BJ (cell line): ENCODE measurements at regions of chr2 and their contacts with region 1.

Region 1: GRCh38 chr2:200713003-200713703 is 98.6 kb upstream of the BZW1 start:
- DNase-seq: peak; percentile 72
- H3K4me3 ChIP-seq: peak overlapping the region; percentile 38
- H3K27me3 ChIP-seq: peaks cover 1% of the 10 kb centered on the region; the same call in 1 of the 2 replicates
- CTCF ChIP-seq: peak; percentile 87

Region 2: DNA sequence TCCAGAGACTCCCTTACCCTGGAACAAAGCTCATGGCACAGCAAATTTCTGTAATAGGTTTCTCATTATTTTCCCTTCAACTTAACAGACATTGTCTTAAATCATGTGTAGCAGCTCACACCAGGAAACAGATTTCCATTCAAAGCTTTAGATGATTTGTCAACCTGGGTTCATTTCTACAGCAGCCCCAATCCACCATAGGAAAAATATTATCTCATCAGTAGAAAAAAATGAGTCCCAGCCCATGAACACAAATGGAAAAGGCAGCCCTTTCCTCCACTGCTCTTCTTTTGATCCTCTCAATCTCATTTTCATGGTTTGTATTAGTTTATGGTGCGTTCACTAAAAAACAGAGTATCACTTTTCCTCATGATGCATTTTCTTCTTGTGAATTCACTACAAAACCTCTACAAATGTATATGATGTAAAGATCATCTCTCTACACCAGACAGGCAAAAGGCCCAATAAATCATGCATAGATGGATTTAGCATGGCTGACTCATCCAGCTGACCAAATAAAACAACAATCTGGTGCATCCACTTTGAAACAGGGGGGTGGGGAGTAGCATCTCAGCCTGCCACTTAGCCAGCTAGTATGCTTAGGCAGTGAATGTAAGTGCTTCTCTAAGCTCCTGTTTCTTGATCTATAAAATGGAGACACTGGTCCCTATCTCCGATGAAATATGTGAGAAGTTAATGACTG is 1334.1 kb before region 1 on chr2:
- CTCF ChIA-PET with region 1: no interaction called
- POLR2A ChIA-PET with region 1: interaction called, 11 read pairs
- DNase-seq: no peak
- H3K4me3 ChIP-seq: no peak overlapping the region
- H3K27me3 ChIP-seq: no peaks in the 10 kb centered on the region
- CTCF ChIP-seq: no peak

Region 3: DNA sequence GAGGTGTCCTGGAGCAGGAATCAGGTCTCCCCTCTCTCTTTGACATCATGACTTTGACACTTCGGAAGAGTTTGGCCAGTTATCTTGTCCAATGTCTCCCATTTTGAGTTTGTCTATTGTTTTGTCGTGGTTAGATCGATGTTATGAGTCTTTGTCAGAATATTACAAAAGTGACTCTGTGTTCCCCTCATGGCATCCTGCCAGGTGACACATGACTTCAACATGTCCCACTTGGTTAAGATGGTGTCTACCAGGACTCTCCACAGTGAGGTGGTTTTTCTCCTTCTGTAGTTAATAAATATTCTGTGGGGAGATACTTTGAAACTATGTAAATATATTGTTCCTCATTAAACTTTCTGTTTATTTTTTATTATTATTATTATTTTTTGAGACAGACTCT is 21.9 kb after region 1 on chr2:
- CTCF ChIA-PET with region 1: interaction called, 60 read pairs
- POLR2A ChIA-PET with region 1: no interaction called
- DNase-seq: no peak
- H3K4me3 ChIP-seq: no peak overlapping the region
- H3K27me3 ChIP-seq: peaks cover 3% of the 10 kb centered on the region; the same call in 1 of the 2 replicates
- CTCF ChIP-seq: no peak

Region 4: GRCh38 chr2:200741468-200742202 is 28.5 kb after region 1 on chr2:
- CTCF ChIA-PET with region 1: interaction called, 60 read pairs
- POLR2A ChIA-PET with region 1: no interaction called
- DNase-seq: no peak
- H3K4me3 ChIP-seq: no peak overlapping the region
- H3K27me3 ChIP-seq: no peaks in the 10 kb centered on the region
- CTCF ChIP-seq: no peak

Region 5: DNA sequence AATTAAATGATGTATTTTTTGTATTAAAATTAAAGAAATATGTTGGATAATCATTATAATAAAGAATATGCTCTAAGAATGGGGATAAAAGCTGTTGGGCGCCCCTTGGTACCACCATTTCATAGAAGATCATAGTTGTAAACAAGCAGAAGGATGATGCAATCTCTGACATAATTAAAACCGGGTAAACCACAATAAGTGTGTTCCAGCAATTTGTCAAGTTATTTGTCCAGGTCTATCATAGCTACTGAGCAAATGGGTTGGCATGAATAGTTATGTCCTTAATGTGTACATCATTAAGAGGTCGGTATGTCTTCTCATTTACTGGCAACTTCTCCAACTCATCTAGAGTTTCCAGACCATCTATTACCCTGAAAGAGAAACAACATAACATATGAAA is 158.0 kb after region 1 on chr2:
- CTCF ChIA-PET with region 1: no interaction called
- POLR2A ChIA-PET with region 1: no interaction called
- DNase-seq: no peak
- H3K4me3 ChIP-seq: no peak overlapping the region
- H3K27me3 ChIP-seq: no peaks in the 10 kb centered on the region
- CTCF ChIP-seq: no peak